ENCODE measurements at regions of chr7 and their contacts with region 1.

Region 1: DNA sequence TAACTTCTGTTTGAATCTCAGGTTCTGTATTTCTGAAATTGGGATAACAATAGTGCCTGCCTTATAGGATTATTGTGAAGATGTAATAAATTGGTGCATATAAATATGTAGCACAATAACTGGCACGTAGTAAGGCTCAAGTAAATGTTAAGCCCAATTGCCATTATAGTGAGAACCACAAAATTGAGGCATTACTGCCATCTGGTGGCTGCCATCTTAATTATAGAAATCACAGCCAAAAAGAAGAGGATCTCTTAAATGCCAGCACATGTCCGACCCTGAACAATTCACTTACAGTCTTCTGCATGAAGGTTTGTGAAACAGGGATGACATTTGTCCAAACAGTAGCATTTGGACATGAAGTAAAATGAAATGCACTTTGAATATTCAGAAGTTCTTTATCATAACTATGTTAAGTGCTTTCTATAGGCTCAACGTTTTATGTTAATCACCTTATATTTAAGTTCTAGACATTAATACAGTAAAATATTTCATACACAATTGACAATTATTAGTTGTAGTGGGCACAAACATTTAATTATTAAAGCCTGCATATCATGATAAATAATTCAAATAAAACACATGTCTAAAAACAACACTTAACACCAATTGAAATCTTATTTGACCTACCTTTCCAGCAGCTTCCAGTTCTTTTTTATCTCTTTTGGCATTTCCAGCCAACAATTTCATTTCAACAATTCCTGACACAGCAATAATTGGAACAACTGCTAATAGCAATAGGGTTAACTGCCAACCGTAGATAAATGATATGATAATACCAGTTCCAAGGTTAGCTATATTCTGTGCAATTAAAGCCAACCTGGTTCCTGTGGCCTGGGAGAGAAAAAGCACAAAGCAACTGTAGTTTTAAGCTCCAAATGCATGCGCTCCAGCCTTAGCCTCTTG is 58.5 kb downstream of the ABCB4 start:
- DNase-seq: peak; percentile 27 to 62
- H3K4me3 ChIP-seq: no peak overlapping the region
- H3K27ac ChIP-seq: no peak overlapping the region
- H3K4me1 ChIP-seq: no peaks in the 10 kb centered on the region
- H3K27me3 ChIP-seq: no peaks in the 10 kb centered on the region
- CTCF ChIP-seq: peak in 2 of 3 experiments; percentile 64 to 67; a peak in 3 of 4 replicates
- EP300 ChIP-seq: no peak
- POLR2A ChIP-seq: no peak
- RAD21 ChIP-seq: peak; percentile 84 to 91

Region 2: GRCh38 chr7:87287738-87288341 is 129.1 kb before region 1 on chr7:
- CTCF ChIA-PET with region 1: interaction called, 10 read pairs
- POLR2A ChIA-PET with region 1: no interaction called
- DNase-seq: no peak
- H3K4me3 ChIP-seq: no peak overlapping the region
- H3K27ac ChIP-seq: no peak overlapping the region
- H3K4me1 ChIP-seq: no peaks in the 10 kb centered on the region
- H3K27me3 ChIP-seq: no peaks in the 10 kb centered on the region
- CTCF ChIP-seq: no peak
- EP300 ChIP-seq: no peak
- POLR2A ChIP-seq: no peak
- RAD21 ChIP-seq: no peak

Region 3: DNA sequence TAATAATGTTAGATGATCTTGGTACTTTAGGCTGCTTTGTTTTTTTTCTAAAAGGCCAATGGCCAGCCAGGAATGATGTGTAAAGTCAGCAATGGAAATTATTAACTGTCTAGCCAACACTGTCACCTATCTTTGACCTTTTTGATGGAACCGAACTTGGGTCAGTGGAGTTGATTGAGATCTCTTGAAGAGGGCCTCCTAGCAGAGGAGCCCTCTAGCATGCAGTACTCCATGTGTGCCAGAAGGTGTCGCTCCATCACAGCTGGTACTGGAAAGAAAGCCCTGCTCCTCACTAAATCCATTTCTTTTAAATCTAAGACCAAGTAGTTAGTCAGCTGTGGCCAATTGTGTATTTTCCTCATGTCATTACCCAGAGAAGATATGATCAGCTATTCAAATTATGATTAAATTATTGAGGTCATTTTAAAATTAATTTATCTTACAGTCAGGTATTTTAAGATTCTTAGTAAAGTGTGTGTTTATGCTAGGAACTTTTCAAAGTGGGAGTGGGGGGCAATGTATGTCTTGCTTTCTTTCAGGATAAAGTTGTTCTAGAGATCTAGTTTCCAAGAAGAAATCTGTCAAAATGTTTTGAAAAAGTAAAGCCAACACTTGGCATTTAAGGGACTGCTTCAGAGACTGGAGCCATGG is 104.6 kb before region 1 on chr7:
- CTCF ChIA-PET with region 1: interaction called, 115 read pairs
- POLR2A ChIA-PET with region 1: no interaction called
- DNase-seq: peak; percentile 9 to 58
- H3K4me3 ChIP-seq: no peak overlapping the region
- H3K27ac ChIP-seq: no peak overlapping the region
- H3K4me1 ChIP-seq: no peaks in the 10 kb centered on the region
- H3K27me3 ChIP-seq: no peaks in the 10 kb centered on the region
- CTCF ChIP-seq: peak; percentile 87 to 96 (median 92)
- EP300 ChIP-seq: no peak
- POLR2A ChIP-seq: no peak
- RAD21 ChIP-seq: peak; percentile 98

Region 4: DNA sequence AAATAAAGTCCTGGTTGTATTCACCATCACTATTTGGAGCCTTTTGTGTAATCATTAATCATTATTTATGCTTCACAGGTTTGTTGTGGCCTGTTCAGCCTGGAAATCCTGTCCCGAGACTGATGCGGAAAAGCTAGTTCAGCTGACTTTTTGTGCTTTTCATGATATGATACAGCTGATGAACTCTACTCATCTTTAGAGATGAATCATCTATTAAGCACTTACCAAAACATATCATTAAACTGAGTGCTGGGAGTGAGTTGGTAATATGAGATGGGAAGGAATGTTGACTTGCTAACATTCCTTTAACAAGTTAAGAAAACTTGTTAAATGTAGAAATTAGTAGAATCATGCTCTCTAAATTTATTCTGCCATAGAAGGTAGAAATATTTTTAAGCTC is 18.5 kb before region 1 on chr7:
- CTCF ChIA-PET with region 1: interaction called, 54 read pairs
- POLR2A ChIA-PET with region 1: no interaction called
- DNase-seq: no peak
- H3K4me3 ChIP-seq: no peak overlapping the region
- H3K27ac ChIP-seq: no peak overlapping the region
- H3K4me1 ChIP-seq: no peaks in the 10 kb centered on the region
- H3K27me3 ChIP-seq: no peaks in the 10 kb centered on the region
- CTCF ChIP-seq: no peak
- EP300 ChIP-seq: no peak
- POLR2A ChIP-seq: no peak
- RAD21 ChIP-seq: no peak

Region 5: GRCh38 chr7:87404674-87405073 is 12.3 kb before region 1 on chr7:
- CTCF ChIA-PET with region 1: interaction called, 54 read pairs
- POLR2A ChIA-PET with region 1: interaction called, 3 read pairs
- DNase-seq: no peak
- H3K4me3 ChIP-seq: no peak overlapping the region
- H3K27ac ChIP-seq: no peak overlapping the region
- H3K4me1 ChIP-seq: no peaks in the 10 kb centered on the region
- H3K27me3 ChIP-seq: no peaks in the 10 kb centered on the region
- CTCF ChIP-seq: no peak
- EP300 ChIP-seq: no peak
- POLR2A ChIP-seq: no peak
- RAD21 ChIP-seq: no peak

Region 6: GRCh38 chr7:87435546-87435945 is 18.6 kb after region 1 on chr7:
- CTCF ChIA-PET with region 1: interaction called, 10 read pairs
- POLR2A ChIA-PET with region 1: no interaction called
- DNase-seq: no peak
- H3K4me3 ChIP-seq: no peak overlapping the region
- H3K27ac ChIP-seq: no peak overlapping the region
- H3K4me1 ChIP-seq: no peaks in the 10 kb centered on the region
- H3K27me3 ChIP-seq: no peaks in the 10 kb centered on the region
- CTCF ChIP-seq: no peak
- EP300 ChIP-seq: no peak
- POLR2A ChIP-seq: no peak
- RAD21 ChIP-seq: no peak

Region 7: DNA sequence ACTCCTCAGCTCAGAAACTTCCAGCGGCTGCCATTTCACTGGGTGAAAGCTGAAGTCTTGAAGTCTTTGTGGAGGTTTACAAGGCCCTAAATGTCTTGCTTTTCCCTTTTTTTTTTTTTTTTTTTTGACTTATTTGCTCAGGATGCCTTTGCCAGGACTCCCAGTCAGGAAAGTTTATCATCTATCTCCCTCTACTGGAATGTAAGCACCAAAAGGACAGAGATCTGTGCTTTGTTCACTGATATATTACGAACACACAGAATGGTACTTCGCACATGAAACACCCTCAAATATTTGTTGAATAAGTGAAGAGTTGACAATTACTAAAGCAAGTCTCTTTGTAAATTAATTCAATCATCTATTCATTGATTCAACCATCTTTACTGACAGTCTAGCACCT is 35.3 kb after region 1 on chr7:
- CTCF ChIA-PET with region 1: interaction called, 15 read pairs
- POLR2A ChIA-PET with region 1: no interaction called
- DNase-seq: no peak
- H3K4me3 ChIP-seq: no peak overlapping the region
- H3K27ac ChIP-seq: no peak overlapping the region
- H3K4me1 ChIP-seq: no peaks in the 10 kb centered on the region
- H3K27me3 ChIP-seq: no peaks in the 10 kb centered on the region
- CTCF ChIP-seq: no peak
- EP300 ChIP-seq: no peak
- POLR2A ChIP-seq: no peak
- RAD21 ChIP-seq: peak; percentile 26 to 36; a peak in 3 of 4 replicates